ENCODE measurements at regions of chr2 and their contacts with region 1.

Region 1: GRCh38 chr2:121596221-121597080 is 52.8 kb downstream of the CLASP1 start:
- DNase-seq: peak; percentile 67
- ATAC-seq: peak; percentile 46
- H3K4me3 ChIP-seq: no peak overlapping the region
- H3K27ac ChIP-seq: peak overlapping the region; percentile 32
- H3K4me1 ChIP-seq: peaks cover 44% of the 10 kb centered on the region
- H3K27me3 ChIP-seq: no peaks in the 10 kb centered on the region
- CTCF ChIP-seq: peak; percentile 72
- EP300 ChIP-seq: no peak
- POLR2A ChIP-seq: no peak
- RAD21 ChIP-seq: peak; percentile 38; the same call in 1 of the 2 replicates

Region 2: GRCh38 chr2:121345887-121346286 is 250.6 kb before region 1 on chr2:
- CTCF ChIA-PET with region 1: no interaction called
- POLR2A ChIA-PET with region 1: no interaction called
- in situ Hi-C with region 1: no loop called
- intact Hi-C with region 1: no loop called
- DNase-seq: no peak
- ATAC-seq: no peak
- H3K4me3 ChIP-seq: no peak overlapping the region
- H3K27ac ChIP-seq: no peak overlapping the region
- H3K4me1 ChIP-seq: no peaks in the 10 kb centered on the region
- H3K27me3 ChIP-seq: no peaks in the 10 kb centered on the region
- CTCF ChIP-seq: no peak
- EP300 ChIP-seq: no peak
- POLR2A ChIP-seq: no peak
- RAD21 ChIP-seq: no peak

Region 3: GRCh38 chr2:121565389-121566250 is 30.8 kb before region 1 on chr2:
- CTCF ChIA-PET with region 1: no interaction called
- POLR2A ChIA-PET with region 1: no interaction called
- in situ Hi-C with region 1: no loop called
- intact Hi-C with region 1: loop called (anchors 2 kb)
- DNase-seq: no peak
- ATAC-seq: no peak
- H3K4me3 ChIP-seq: no peak overlapping the region
- H3K27ac ChIP-seq: no peak overlapping the region
- H3K4me1 ChIP-seq: peaks cover 71% of the 10 kb centered on the region
- H3K27me3 ChIP-seq: no peaks in the 10 kb centered on the region
- CTCF ChIP-seq: no peak
- EP300 ChIP-seq: no peak
- POLR2A ChIP-seq: no peak
- RAD21 ChIP-seq: no peak

Region 4: GRCh38 chr2:121689356-121689755 is 92.9 kb after region 1 on chr2:
- CTCF ChIA-PET with region 1: no interaction called
- POLR2A ChIA-PET with region 1: no interaction called
- in situ Hi-C with region 1: no loop called
- intact Hi-C with region 1: loop called (anchors 1 kb)
- DNase-seq: peak; percentile 69
- ATAC-seq: peak; percentile 89
- H3K4me3 ChIP-seq: no peak overlapping the region
- H3K27ac ChIP-seq: no peak overlapping the region
- H3K4me1 ChIP-seq: peaks cover 33% of the 10 kb centered on the region
- H3K27me3 ChIP-seq: no peaks in the 10 kb centered on the region
- CTCF ChIP-seq: peak; percentile 59
- EP300 ChIP-seq: no peak
- POLR2A ChIP-seq: no peak
- RAD21 ChIP-seq: peak; percentile 59; the same call in 1 of the 2 replicates

Region 5: DNA sequence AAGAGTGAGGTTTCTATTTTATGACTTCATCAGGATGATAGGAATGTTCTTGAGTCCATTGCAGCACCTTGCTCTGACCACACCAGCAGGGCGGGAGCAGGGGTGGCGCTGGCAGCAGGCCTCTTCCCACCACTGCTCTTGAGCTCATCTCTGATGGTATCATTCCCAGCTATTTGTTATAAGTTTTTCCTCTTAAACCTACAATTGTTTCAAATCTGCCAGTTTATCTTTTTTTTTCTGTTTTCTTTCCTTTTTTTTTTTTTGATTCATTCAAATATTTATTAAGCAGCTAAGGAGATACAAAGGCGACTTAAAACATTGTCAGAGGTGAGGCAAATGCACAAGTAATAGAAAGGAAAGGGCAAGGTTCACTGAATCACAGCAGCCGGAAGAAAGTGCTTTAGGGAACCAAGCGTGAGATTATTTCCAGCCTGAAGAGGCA is 111.5 kb after region 1 on chr2:
- CTCF ChIA-PET with region 1: no interaction called
- POLR2A ChIA-PET with region 1: interaction called, 5 read pairs
- in situ Hi-C with region 1: loop called (anchors 10 kb)
- intact Hi-C with region 1: no loop called
- DNase-seq: peak; percentile 43
- ATAC-seq: peak; percentile 87
- H3K4me3 ChIP-seq: peak overlapping the region; percentile 51 to 70 (median 51)
- H3K27ac ChIP-seq: peak overlapping the region; percentile 11
- H3K4me1 ChIP-seq: peaks cover 56% of the 10 kb centered on the region
- H3K27me3 ChIP-seq: peaks cover 0 to 16% of the 10 kb centered on the region in 2 experiments; a peak in 2 of 5 replicates
- CTCF ChIP-seq: no peak
- EP300 ChIP-seq: no peak
- POLR2A ChIP-seq: no peak
- RAD21 ChIP-seq: no peak

Region 6: DNA sequence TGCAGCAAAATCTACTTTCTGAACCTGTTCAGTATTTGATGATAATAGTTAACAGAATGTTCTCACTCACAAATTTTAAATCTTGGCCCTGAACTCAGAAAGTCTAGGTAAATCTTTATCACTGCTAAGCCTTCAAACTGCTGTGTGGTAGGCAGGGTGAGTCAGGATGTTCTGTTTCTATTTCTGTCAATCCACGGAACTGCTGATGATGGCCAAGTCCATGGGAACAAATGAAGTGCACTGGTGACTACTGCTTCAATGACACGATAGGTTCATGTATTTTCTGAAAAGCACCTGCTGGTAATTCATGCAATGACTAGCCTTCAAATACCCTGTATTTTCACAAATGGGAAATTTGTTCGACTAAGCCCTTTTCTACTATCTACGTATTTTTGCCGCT is 126.0 kb after region 1 on chr2:
- CTCF ChIA-PET with region 1: interaction called, 17 read pairs
- POLR2A ChIA-PET with region 1: interaction called, 3 read pairs
- in situ Hi-C with region 1: loop called (anchors 10 kb)
- intact Hi-C with region 1: loop called (anchors 1 kb)
- DNase-seq: no peak
- ATAC-seq: peak; percentile 34
- H3K4me3 ChIP-seq: no peak overlapping the region
- H3K27ac ChIP-seq: no peak overlapping the region
- H3K4me1 ChIP-seq: peaks cover 17% of the 10 kb centered on the region
- H3K27me3 ChIP-seq: no peaks in the 10 kb centered on the region
- CTCF ChIP-seq: no peak
- EP300 ChIP-seq: no peak
- POLR2A ChIP-seq: no peak
- RAD21 ChIP-seq: no peak

Measured in HepG2 (cell line).